HEK293T (cell line): ENCODE measurements at regions of chr15 and their contacts with region 1.

Region 1: GRCh38 chr15:51192521-51193280 is 98.0 kb upstream of the TNFAIP8L3 start:
- DNase-seq: peak; percentile 70

Region 2: DNA sequence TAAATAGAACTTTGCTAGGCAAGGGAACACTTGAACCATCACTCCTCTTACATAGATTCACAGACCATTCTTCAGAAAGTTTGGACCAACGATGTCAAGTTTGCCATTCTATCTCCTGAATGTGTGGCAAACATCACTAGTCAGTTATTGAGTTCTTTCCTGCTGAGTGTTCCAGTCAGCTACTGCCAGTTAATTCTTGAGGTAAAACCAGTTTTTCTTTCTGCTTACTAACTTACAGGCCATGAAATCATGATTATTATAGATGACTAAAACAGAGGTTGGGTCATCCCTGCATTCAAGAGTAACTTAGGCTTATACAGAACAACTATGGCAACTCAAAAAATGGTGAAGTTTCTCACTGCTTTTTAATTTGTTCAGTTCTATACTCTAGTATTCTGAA is 196.1 kb before region 1 on chr15:
- CTCF ChIA-PET with region 1: no interaction called
- POLR2A ChIA-PET with region 1: no interaction called
- DNase-seq: no peak

Region 3: GRCh38 chr15:51132384-51133139 is 60.1 kb before region 1 on chr15:
- CTCF ChIA-PET with region 1: interaction called, 14 read pairs
- POLR2A ChIA-PET with region 1: no interaction called
- DNase-seq: peak; percentile 59

Region 4: GRCh38 chr15:51156957-51157356 is 35.7 kb before region 1 on chr15:
- CTCF ChIA-PET with region 1: no interaction called
- POLR2A ChIA-PET with region 1: no interaction called
- DNase-seq: no peak